ENCODE measurements at regions of chr2 and their contacts with region 1.

Region 1: GRCh38 chr2:73385595-73386341 is at the start of gene ALMS1:
- DNase-seq: peak; percentile 93
- ATAC-seq: peak; percentile 80
- H3K4me3 ChIP-seq: peak within 1 kb of the TSS; percentile 56 to 87 (median 82)
- H3K4me3 Mint-ChIP-seq: peak within 1 kb of the TSS; percentile 90
- H3K27ac ChIP-seq: peak within 1 kb of the TSS; percentile 80 to 82
- H3K27ac Mint-ChIP-seq: peak within 1 kb of the TSS; percentile 93
- H3K4me1 ChIP-seq: peaks cover 18 to 20% of the 10 kb centered on the region in 2 donors
- H3K4me1 Mint-ChIP-seq: peaks cover 23% of the 10 kb centered on the region
- H3K27me3 ChIP-seq: peaks cover 0 to 8% (median 4%) of the 10 kb centered on the region in 4 experiments
- H3K27me3 Mint-ChIP-seq: peaks cover 17% of the 10 kb centered on the region
- CTCF ChIP-seq: no peak
- total RNA-seq, gene ALMS1: 32.1 and 33.1 TPM in 2 replicates

Region 2: DNA sequence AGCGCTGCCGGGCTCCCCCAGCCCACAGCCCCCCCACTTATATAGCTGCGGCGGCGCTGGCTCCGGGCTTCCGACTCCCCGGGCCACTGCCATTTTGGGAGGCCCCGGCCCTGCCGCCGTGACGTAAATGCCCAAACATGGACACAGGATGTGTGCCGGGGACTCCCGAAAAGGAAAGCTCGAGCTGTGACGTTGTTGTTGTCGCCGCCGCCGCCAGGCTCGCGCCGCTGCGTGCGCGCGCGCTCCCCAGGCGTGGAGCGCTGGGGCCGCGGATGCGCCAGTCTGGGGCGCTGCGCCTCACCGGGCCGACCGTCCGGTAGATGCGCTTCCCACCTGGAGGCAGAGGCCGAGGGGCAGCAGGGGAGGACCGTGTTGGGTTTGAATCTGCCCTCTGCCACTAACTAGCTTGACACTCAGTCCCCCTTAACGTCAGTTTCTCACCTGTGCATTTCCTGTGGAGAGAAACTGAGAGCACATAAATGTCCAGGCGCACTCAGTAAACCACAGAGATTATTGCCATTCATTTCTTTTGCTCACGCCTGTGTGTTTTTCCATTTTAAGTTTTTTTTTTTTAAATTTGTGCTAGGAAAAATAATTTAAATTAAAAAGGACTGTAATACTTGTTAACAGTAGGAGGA is 92.1 kb before region 1 on chr2 and contains the start of gene EGR4:
- CTCF ChIA-PET with region 1: no interaction called
- POLR2A ChIA-PET with region 1: no interaction called
- intact Hi-C with region 1: loop called (anchors 2 kb)
- DNase-seq: peak; percentile 91
- ATAC-seq: peak; percentile 81
- H3K4me3 ChIP-seq: peak within 1 kb of the TSS; percentile 0 to 55 (median 46)
- H3K4me3 Mint-ChIP-seq: peak within 1 kb of the TSS; percentile 81
- H3K27ac ChIP-seq: no peak within 1 kb of the TSS
- H3K27ac Mint-ChIP-seq: peak within 1 kb of the TSS; percentile 70
- H3K4me1 ChIP-seq: peaks cover 28 to 37% of the 10 kb centered on the region in 2 donors
- H3K4me1 Mint-ChIP-seq: peaks cover 22% of the 10 kb centered on the region
- H3K27me3 ChIP-seq: peaks cover 2 to 73% (median 64%) of the 10 kb centered on the region in 4 experiments
- H3K27me3 Mint-ChIP-seq: peaks cover 58% of the 10 kb centered on the region
- CTCF ChIP-seq: no peak
- total RNA-seq, gene EGR4: 0.30 and 0.41 TPM in 2 replicates

Region 3: GRCh38 chr2:73373344-73373743 is 12.4 kb before region 1 on chr2:
- CTCF ChIA-PET with region 1: no interaction called
- POLR2A ChIA-PET with region 1: no interaction called
- intact Hi-C with region 1: no loop called
- DNase-seq: no peak
- ATAC-seq: no peak
- H3K4me3 ChIP-seq: no peak overlapping the region
- H3K4me3 Mint-ChIP-seq: no peak overlapping the region
- H3K27ac ChIP-seq: no peak overlapping the region
- H3K27ac Mint-ChIP-seq: no peak overlapping the region
- H3K4me1 ChIP-seq: no peaks in the 10 kb centered on the region
- H3K4me1 Mint-ChIP-seq: no peaks in the 10 kb centered on the region
- H3K27me3 ChIP-seq: peaks cover 0 to 23% (median 5%) of the 10 kb centered on the region in 4 experiments
- H3K27me3 Mint-ChIP-seq: peaks cover 43% of the 10 kb centered on the region
- CTCF ChIP-seq: no peak

Region 4: DNA sequence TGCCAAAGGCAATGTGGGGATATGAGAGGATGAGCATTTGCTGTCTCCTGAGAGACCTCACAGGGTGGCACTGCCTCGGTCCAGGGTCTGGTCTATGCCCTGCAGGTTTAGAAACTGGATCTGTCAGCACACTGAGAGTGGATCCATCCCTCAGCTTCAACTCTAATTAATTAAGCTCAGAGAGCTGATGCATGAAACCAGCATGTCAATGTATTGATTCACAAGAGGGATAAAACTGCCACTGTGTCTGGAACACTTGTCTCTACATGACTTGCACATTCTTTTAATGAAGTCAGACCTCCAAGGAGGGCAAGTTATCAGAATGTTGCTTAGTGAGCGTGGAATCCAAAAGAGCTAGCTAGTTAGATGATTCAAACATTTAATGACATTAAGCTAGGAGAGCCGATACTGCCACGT is 1550.2 kb after region 1 on chr2:
- CTCF ChIA-PET with region 1: no interaction called
- POLR2A ChIA-PET with region 1: no interaction called
- intact Hi-C with region 1: no loop called
- DNase-seq: no peak
- ATAC-seq: no peak
- H3K4me3 ChIP-seq: no peak overlapping the region
- H3K4me3 Mint-ChIP-seq: no peak overlapping the region
- H3K27ac ChIP-seq: no peak overlapping the region
- H3K27ac Mint-ChIP-seq: no peak overlapping the region
- H3K4me1 ChIP-seq: no peaks in the 10 kb centered on the region
- H3K4me1 Mint-ChIP-seq: no peaks in the 10 kb centered on the region
- H3K27me3 ChIP-seq: no peaks in the 10 kb centered on the region
- H3K27me3 Mint-ChIP-seq: no peaks in the 10 kb centered on the region
- CTCF ChIP-seq: no peak